CD8-positive, alpha-beta T cell (primary cell): ENCODE measurements at regions of chr9 and their contacts with region 1.

Region 1: DNA sequence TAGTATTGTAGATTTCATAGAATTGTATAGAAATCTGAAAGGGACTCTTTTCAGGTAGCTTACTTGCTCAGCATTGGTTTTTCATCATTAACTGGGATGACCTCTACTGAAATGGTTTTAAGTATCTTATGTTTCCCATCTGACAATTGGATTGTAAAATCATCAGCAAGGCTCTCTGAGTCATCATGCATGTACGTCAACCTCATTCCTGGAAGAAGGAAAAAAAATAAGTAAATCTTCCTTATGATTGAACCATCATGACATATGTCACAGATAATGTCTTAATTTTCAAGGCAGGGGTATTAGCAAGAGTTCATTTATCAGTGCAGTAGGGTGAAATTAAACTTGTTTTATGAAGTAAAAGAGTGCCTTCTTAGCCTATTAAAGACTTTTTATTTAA is 74.9 kb upstream of the CER1 start:
- DNase-seq: no peak
- ATAC-seq: no peak
- H3K4me3 ChIP-seq: no peak overlapping the region
- H3K4me3 Mint-ChIP-seq: no peak overlapping the region
- H3K27ac ChIP-seq: no peak overlapping the region
- H3K27ac Mint-ChIP-seq: no peak overlapping the region
- H3K4me1 ChIP-seq: no peaks in the 10 kb centered on the region
- H3K4me1 Mint-ChIP-seq: no peaks in the 10 kb centered on the region
- H3K27me3 ChIP-seq: no peaks in the 10 kb centered on the region
- H3K27me3 Mint-ChIP-seq: peaks cover 3% of the 10 kb centered on the region
- CTCF ChIP-seq: no peak

Region 2: GRCh38 chr9:14066831-14067230 is 730.6 kb before region 1 on chr9:
- CTCF ChIA-PET with region 1: no interaction called
- POLR2A ChIA-PET with region 1: no interaction called
- intact Hi-C with region 1: loop called in 1 of 2 experiments (anchors 5 kb)
- DNase-seq: no peak
- ATAC-seq: no peak
- H3K4me3 ChIP-seq: no peak overlapping the region
- H3K4me3 Mint-ChIP-seq: no peak overlapping the region
- H3K27ac ChIP-seq: no peak overlapping the region
- H3K27ac Mint-ChIP-seq: no peak overlapping the region
- H3K4me1 ChIP-seq: no peaks in the 10 kb centered on the region
- H3K4me1 Mint-ChIP-seq: no peaks in the 10 kb centered on the region
- H3K27me3 ChIP-seq: no peaks in the 10 kb centered on the region
- H3K27me3 Mint-ChIP-seq: no peaks in the 10 kb centered on the region
- CTCF ChIP-seq: no peak

Region 3: GRCh38 chr9:14756291-14756690 is 41.1 kb before region 1 on chr9:
- CTCF ChIA-PET with region 1: no interaction called
- POLR2A ChIA-PET with region 1: no interaction called
- intact Hi-C with region 1: no loop called
- DNase-seq: no peak
- ATAC-seq: no peak
- H3K4me3 ChIP-seq: no peak overlapping the region
- H3K4me3 Mint-ChIP-seq: no peak overlapping the region
- H3K27ac ChIP-seq: no peak overlapping the region
- H3K27ac Mint-ChIP-seq: no peak overlapping the region
- H3K4me1 ChIP-seq: no peaks in the 10 kb centered on the region
- H3K4me1 Mint-ChIP-seq: no peaks in the 10 kb centered on the region
- H3K27me3 ChIP-seq: peaks cover 0 to 5% of the 10 kb centered on the region in 2 experiments
- H3K27me3 Mint-ChIP-seq: peaks cover 10% of the 10 kb centered on the region
- CTCF ChIP-seq: no peak